ENCODE measurements at regions of chr4 and their contacts with region 1.

Region 1: DNA sequence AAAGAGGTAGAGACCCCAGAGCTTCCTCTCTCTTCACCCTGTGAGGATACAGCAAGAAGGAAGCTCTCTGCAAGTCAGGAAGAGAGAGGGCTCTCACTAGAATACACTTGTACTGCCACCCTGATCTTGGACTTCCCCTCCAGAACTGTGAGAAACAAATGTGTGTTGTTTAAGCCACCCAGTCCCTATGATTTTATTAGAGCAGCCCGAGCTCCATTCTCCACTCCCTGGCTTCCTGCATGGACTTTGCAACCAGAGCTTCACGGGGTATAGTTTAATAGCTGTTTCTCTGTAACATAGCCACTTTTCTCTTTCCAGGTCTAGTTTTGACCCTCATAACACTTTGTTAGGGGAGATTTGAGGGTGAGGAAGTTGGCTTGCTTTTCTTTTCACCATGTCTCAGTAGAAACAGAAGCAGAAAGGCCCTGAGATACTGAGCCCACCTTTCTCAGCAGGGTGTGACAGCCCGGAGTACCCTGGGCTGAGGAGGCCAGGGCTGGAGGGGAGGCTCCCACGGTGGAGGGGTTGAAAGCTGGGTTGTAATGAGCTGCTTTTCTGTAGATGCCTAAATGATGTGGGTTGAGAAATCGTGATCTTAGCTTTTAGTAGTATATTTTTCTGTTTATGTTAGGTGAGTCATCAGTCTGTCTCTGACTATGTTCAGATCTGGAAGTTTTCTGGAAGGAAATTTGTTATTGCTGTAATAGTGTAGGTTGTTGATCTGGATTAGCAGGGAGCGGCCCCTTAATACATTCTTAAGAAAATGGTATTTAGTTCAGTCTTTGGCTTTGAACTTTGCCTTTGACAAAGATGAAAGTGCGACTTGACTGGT is 118.6 kb downstream of the PTTG2 start:
- DNase-seq: peak; percentile 94
- ATAC-seq: peak; percentile 68
- H3K4me3 ChIP-seq: no peak overlapping the region
- H3K27ac ChIP-seq: peak overlapping the region; percentile 97
- H3K4me1 ChIP-seq: peaks cover 37% of the 10 kb centered on the region
- H3K27me3 ChIP-seq: no peaks in the 10 kb centered on the region
- CTCF ChIP-seq: no peak
- POLR2A ChIP-seq: peak; percentile 61
- RAD21 ChIP-seq: peak; percentile 17; the same call in 1 of the 2 replicates

Region 2: DNA sequence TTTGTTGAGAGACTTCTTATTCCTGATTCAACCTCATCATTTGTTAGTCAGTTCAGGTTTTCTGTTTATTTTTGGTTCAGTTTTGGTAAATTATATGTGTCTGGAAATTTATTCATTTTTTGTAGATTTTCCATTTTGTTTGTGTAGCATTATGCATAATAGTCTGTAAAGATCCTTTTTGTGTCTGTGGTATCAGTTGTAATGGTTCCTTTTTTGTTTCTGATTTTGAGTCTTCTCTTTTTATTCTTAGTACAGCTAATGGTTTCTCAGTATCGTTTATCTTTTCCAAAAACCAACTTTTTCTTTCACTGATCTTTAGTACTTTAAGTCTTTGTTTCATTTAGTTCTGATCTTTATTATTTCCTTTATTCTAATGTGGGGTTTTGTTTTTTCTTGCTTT is 772.8 kb before region 1 on chr4:
- CTCF ChIA-PET with region 1: no interaction called
- POLR2A ChIA-PET with region 1: no interaction called
- dilution Hi-C with region 1: no loop called
- in situ Hi-C with region 1: no loop called
- intact Hi-C with region 1: no loop called
- DNase-seq: no peak
- ATAC-seq: no peak
- H3K4me3 ChIP-seq: no peak overlapping the region
- H3K27ac ChIP-seq: no peak overlapping the region
- H3K4me1 ChIP-seq: no peaks in the 10 kb centered on the region
- H3K27me3 ChIP-seq: no peaks in the 10 kb centered on the region
- CTCF ChIP-seq: no peak
- POLR2A ChIP-seq: no peak
- RAD21 ChIP-seq: no peak

Region 3: GRCh38 chr4:38132107-38132673 is 53.4 kb after region 1 on chr4:
- CTCF ChIA-PET with region 1: interaction called, 4 read pairs
- POLR2A ChIA-PET with region 1: no interaction called
- dilution Hi-C with region 1: no loop called
- in situ Hi-C with region 1: no loop called
- intact Hi-C with region 1: loop called (anchors 5 kb)
- DNase-seq: peak; percentile 99
- ATAC-seq: peak; percentile 75
- H3K4me3 ChIP-seq: peak overlapping the region; percentile 4; the same call in 1 of the 2 replicates
- H3K27ac ChIP-seq: peak overlapping the region; percentile 33; the same call in 1 of the 2 replicates
- H3K4me1 ChIP-seq: peaks cover 17% of the 10 kb centered on the region
- H3K27me3 ChIP-seq: no peaks in the 10 kb centered on the region
- CTCF ChIP-seq: no peak
- POLR2A ChIP-seq: peak; percentile 64
- RAD21 ChIP-seq: peak; percentile 27; the same call in 1 of the 2 replicates

Region 4: DNA sequence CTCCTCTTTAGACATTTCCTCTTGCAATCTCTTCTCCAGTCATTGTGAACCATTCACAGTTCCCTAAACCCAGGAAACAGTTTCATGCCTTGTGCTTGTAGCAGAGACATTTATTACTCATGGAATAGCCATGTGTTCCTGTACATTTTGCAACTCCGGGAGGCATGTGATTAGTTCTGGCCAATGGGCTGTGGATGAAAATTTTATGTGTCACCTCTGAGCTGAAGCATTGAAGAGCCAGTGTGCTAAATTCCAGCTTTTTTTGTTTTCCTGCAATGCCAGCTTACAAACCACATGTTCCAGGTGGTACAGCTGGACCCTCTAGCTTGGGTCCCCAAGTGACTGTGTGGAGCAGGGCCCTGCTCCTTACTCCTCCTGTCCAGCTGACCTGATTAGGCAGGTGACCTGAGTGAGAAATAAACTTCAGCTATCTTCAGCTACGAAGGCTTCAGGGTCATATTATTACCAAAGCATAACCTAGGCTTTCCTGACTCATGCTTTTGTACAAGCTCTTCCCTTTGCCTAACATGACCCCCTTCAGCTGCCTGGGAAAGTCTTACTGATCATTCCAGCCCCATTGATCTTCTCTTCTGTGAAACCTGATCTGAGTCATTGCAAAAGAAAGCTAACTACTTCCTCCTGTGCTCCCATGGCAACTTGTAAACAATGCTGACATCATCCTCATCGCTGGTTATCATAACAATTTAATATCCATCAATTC is 81.8 kb after region 1 on chr4:
- CTCF ChIA-PET with region 1: no interaction called
- POLR2A ChIA-PET with region 1: no interaction called
- dilution Hi-C with region 1: no loop called
- in situ Hi-C with region 1: no loop called
- intact Hi-C with region 1: loop called (anchors 5 kb)
- DNase-seq: peak; percentile 99
- ATAC-seq: peak; percentile 86
- H3K4me3 ChIP-seq: no peak overlapping the region
- H3K27ac ChIP-seq: peak overlapping the region; percentile 93
- H3K4me1 ChIP-seq: peaks cover 16% of the 10 kb centered on the region
- H3K27me3 ChIP-seq: no peaks in the 10 kb centered on the region
- CTCF ChIP-seq: no peak
- POLR2A ChIP-seq: peak; percentile 64; the same call in 1 of the 2 replicates
- RAD21 ChIP-seq: peak; percentile 16; the same call in 1 of the 2 replicates

Region 5: GRCh38 chr4:38172078-38172477 is 93.3 kb after region 1 on chr4:
- CTCF ChIA-PET with region 1: no interaction called
- POLR2A ChIA-PET with region 1: no interaction called
- dilution Hi-C with region 1: no loop called
- in situ Hi-C with region 1: no loop called
- intact Hi-C with region 1: no loop called
- DNase-seq: no peak
- ATAC-seq: no peak
- H3K4me3 ChIP-seq: no peak overlapping the region
- H3K27ac ChIP-seq: no peak overlapping the region
- H3K4me1 ChIP-seq: peaks cover 3% of the 10 kb centered on the region; the same call in 1 of the 2 replicates
- H3K27me3 ChIP-seq: no peaks in the 10 kb centered on the region
- CTCF ChIP-seq: no peak
- POLR2A ChIP-seq: no peak
- RAD21 ChIP-seq: no peak

Region 6: DNA sequence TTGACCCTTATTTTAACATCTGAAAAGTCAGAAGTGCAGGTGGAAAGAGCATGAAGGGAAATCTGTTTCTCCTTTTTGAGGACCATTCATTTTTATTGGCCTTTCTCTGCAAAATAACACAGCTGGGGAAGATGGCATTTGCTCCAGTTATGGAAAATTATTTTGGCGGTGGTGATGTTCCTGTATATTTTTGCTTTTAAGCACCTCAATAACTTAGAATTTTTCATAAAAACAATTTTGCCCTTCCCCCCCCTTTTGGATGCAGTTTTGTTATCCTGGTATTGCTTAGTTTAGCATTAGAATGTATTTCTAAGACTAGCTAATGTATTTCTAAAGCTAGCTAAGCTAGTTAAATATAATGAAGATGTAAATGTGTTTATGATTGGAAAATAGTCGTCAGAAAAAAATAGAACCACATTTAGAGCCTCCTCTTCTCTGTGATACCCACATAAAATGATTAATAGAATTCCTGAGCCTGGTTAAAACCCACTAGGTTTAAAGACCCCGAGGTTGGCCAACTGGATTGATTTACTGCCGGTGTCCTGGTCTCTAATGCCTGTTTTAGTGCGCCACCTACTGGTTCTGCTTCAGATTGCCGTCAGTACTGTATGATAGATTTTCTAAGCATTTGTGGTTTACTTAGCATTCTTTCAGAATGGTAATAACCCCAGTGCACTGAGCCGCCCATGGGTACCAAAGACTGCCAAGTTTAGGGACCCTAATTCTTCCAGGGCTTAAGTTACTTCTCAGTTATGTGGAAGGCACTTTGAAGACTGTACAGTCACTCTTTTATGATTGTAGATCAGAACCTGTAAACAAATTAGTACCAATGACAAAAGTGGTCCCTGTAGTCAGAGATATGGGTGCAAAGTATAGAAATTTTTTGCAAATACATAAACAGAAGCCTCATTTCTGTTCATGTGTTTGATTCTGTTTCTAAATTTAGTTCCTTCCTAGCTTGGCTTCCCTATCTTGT is 596.6 kb after region 1 on chr4:
- CTCF ChIA-PET with region 1: no interaction called
- POLR2A ChIA-PET with region 1: no interaction called
- dilution Hi-C with region 1: no loop called
- in situ Hi-C with region 1: loop called (anchors 5 kb)
- intact Hi-C with region 1: no loop called
- DNase-seq: peak; percentile 88
- ATAC-seq: peak; percentile 70
- H3K4me3 ChIP-seq: no peak overlapping the region
- H3K27ac ChIP-seq: no peak overlapping the region
- H3K4me1 ChIP-seq: peaks cover 40% of the 10 kb centered on the region
- H3K27me3 ChIP-seq: no peaks in the 10 kb centered on the region
- CTCF ChIP-seq: peak; percentile 94
- POLR2A ChIP-seq: no peak
- RAD21 ChIP-seq: peak; percentile 98